ENCODE measurements at regions of chr12 and their contacts with region 1.

Region 1: GRCh38 chr12:64610149-64610678 is at the start of gene RASSF3:
- DNase-seq: peak; percentile 79
- ATAC-seq: peak; percentile 86 to 92
- total RNA-seq, gene RASSF3: 116 to 118 TPM

Region 2: GRCh38 chr12:64412459-64412858 is 197.8 kb before region 1 on chr12:
- intact Hi-C with region 1: no loop called
- DNase-seq: no peak
- ATAC-seq: no peak

Region 3: GRCh38 chr12:64551698-64552097 is 58.5 kb before region 1 on chr12:
- intact Hi-C with region 1: loop called in 1 of 2 experiments (anchors 2 kb)
- DNase-seq: no peak
- ATAC-seq: no peak

Region 4: DNA sequence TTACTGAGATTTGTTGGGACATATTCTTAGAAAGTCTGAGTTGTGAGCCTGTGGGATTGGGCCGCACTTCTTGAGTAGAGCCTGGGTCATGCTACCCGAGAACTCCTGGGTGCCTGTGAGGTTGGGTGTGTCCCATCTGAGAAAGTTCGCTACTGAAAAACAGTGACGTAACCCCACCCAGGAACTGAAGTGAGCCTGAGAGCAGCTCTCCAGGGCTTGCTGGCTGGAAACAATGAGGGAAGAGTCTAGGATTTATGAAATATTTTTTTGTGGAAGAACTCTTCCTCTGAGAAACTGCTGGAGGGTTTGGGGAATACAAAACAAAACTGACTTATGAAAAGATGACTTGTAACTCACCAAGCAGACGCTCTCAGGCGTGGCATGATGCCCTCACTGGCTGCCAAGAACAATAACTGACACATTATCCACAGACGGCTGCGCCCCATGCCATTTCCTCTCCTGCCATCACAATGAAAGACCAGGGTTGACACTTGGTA is 69.3 kb after region 1 on chr12:
- intact Hi-C with region 1: loop called in 1 of 2 experiments (anchors 5 kb)
- DNase-seq: peak; percentile 84
- ATAC-seq: peak; percentile 59 to 64

Region 5: GRCh38 chr12:64696080-64696741 is 86.0 kb after region 1 on chr12:
- intact Hi-C with region 1: loop called (anchors 5 to 10 kb)
- DNase-seq: no peak
- ATAC-seq: no peak

Region 6: GRCh38 chr12:64780531-64781279 is 170.5 kb after region 1 on chr12:
- intact Hi-C with region 1: no loop called
- DNase-seq: peak; percentile 68
- ATAC-seq: peak; percentile 83 to 85